ENCODE measurements at regions of chr12 and their contacts with region 1.

Region 1: DNA sequence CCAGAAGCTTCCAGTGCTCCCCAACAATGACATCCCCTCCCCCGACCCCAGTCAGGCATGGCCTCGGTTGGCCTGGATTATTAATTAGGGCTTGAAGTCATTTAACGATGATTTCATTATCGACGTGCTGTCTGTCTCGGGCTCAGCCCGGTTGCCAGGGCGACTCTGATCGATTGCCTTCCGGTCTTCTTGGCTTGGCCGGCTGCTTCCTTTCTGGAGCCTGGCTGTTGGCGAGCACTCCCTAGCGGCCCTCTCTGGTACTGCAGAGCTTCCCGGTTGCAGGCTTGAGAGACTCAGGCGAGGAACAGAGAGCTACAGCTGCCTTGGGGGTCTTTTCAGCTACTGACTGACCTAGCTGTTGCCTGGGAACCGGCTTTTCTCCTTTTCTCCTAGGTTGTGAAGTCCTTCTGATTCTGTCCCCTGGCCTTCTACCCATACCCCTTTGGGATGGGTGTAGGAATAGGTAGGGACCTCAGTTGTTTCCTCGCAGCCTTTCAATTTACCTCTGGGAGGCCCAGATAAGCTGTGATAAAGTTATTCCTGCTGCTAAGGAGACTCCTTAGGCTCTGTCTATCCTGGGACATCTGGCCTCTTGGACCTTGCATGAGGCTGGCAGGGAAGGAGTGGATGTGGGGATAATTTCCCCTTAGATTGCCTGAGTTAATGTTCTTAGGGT is 5.5 kb upstream of the CISTR start:
- DNase-seq: peak; percentile 19
- H3K4me3 ChIP-seq: no peak overlapping the region
- CTCF ChIP-seq: peak; percentile 89

Region 2: GRCh38 chr12:54191550-54192022 is 434.4 kb after region 1 on chr12:
- in situ Hi-C with region 1: loop called (anchors 25 kb)
- DNase-seq: peak; percentile 72
- H3K4me3 ChIP-seq: no peak overlapping the region
- CTCF ChIP-seq: peak; percentile 92